PC-3 (cell line): ENCODE measurements at regions of chr16 and their contacts with region 1.

Region 1: DNA sequence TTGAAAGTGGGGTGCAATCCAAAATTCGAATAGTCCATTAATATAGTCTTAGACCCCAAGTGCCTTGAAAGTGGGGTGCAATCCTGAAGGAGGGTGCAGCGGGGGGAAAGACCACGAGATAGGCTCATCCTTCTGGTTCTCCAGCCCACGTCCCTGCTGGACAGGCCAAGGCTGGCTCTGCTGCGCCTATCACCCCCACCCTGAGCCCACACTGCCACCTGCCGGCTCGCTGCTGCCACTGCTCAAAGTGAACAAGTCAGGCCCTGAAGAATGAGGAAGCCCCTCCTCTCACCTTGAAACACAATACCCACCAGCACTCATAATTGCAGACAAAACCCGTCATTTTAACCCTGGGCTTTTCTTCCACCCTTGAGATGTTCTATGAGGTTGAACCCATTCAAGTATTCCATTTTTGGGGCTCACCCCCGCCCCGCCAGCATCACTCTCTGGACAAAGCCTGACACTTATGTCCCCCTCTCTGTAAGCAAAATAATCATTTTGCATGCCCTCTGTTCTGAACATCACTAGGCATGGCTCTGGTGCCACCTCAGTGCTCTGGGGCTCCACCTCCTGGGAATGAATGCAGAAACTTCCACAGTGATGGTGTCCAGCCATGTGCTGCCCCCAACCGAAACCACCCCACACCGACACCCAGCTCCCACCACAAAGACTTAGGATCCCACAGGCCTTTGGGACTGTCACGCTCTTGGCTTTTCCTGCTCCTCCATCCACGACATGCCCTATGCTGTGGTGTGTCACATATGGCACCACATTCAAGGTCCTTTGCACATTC is 56.8 kb downstream of the BEAN1 start:
- DNase-seq: peak; percentile 76
- ATAC-seq: peak; percentile 75
- H3K4me3 ChIP-seq: no peak overlapping the region
- H3K27ac ChIP-seq: no peak overlapping the region
- H3K4me1 ChIP-seq: peaks cover 32% of the 10 kb centered on the region
- H3K27me3 ChIP-seq: no peaks in the 10 kb centered on the region
- CTCF ChIP-seq: peak; percentile 87

Region 2: GRCh38 chr16:66357153-66357928 is 126.5 kb before region 1 on chr16:
- CTCF ChIA-PET with region 1: no interaction called
- POLR2A ChIA-PET with region 1: no interaction called
- intact Hi-C with region 1: loop called (anchors 5 kb)
- DNase-seq: peak; percentile 90
- ATAC-seq: peak; percentile 82
- H3K4me3 ChIP-seq: no peak overlapping the region
- H3K27ac ChIP-seq: no peak overlapping the region
- H3K4me1 ChIP-seq: peaks cover 13% of the 10 kb centered on the region
- H3K27me3 ChIP-seq: no peaks in the 10 kb centered on the region
- CTCF ChIP-seq: peak; percentile 80

Region 3: GRCh38 chr16:66406534-66407221 is 77.2 kb before region 1 on chr16:
- CTCF ChIA-PET with region 1: interaction called, 6 read pairs
- POLR2A ChIA-PET with region 1: no interaction called
- intact Hi-C with region 1: loop called (anchors 1 kb)
- DNase-seq: peak; percentile 69
- ATAC-seq: peak; percentile 66
- H3K4me3 ChIP-seq: peak overlapping the region; percentile 79
- H3K27ac ChIP-seq: peak overlapping the region; percentile 41
- H3K4me1 ChIP-seq: peaks cover 27% of the 10 kb centered on the region
- H3K27me3 ChIP-seq: no peaks in the 10 kb centered on the region
- CTCF ChIP-seq: peak; percentile 76

Region 4: DNA sequence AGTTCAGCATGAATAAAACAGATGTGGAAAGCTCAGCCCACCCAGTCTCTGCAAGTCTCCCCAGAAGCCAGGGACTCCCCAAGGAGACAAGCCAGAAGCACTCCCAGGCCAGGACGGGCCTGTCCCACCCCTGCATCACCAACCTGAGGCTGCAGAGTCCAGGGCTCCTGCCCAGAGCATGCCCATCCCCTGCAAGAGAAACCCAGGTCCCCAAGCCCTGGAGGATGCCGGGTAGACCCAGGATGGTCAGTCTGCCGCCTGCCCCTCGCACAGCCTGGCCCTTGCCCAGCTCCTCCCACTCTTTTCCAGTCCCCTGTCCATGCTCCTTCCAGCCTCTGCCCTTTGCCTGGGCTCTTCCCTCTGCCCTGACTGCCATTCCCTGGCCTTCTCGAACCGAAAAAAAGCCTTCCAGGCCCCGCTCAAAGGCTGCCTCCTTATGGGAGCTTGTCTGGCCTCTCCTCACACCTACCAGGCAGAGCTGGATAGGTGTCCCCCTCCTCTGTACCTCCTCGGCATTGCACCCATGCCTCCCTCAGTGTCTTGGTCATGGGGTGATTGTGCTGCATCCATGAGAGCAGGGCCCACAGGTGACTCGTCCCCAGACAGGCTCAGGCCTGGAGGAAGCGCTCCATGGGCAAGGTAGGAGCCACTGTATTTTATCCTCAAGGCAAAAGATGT is 12.0 kb before region 1 on chr16:
- CTCF ChIA-PET with region 1: no interaction called
- POLR2A ChIA-PET with region 1: no interaction called
- intact Hi-C with region 1: no loop called
- DNase-seq: no peak
- ATAC-seq: no peak
- H3K4me3 ChIP-seq: no peak overlapping the region
- H3K27ac ChIP-seq: no peak overlapping the region
- H3K4me1 ChIP-seq: peaks cover 8% of the 10 kb centered on the region; the same call in 1 of the 2 replicates
- H3K27me3 ChIP-seq: no peaks in the 10 kb centered on the region
- CTCF ChIP-seq: no peak

Region 5: DNA sequence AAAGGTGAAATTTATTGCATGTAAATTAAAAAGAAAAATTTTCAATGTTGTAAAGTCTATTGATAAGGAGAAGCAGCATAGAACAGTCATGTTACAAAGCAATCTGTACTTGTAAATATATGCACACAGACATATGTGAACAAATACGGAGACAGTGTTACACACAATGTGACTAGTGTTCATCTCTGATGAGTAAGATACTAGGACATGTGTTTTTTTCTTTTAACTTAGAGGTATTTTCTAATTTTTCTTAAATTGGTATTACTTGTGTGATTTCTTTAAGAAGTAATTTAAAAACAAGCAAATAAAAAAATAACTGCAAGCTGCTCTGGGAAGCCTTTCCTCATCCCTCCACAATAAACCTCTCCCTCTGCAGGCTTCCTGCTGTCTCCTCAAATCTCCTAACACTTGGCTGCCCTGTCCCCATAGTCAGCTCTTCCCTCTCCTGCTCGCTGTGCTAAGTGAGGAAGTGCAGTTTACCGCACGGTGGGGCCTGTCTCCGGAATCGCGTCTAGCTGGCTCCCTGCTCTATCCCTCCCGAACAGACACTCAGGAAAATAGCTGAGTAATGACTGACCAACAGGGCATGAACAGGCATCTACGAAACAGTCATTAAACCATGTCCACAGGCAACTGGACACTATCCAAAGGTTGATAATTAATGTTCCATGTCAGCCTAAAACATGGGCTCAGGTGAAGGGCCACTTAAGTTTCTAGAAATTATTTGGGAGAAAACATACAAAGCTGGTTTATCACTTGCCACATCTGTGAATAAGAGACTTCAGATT is 176.7 kb after region 1 on chr16:
- CTCF ChIA-PET with region 1: no interaction called
- POLR2A ChIA-PET with region 1: no interaction called
- intact Hi-C with region 1: no loop called
- DNase-seq: peak; percentile 73
- ATAC-seq: peak; percentile 96
- H3K4me3 ChIP-seq: peak overlapping the region; percentile 5; the same call in 1 of the 2 replicates
- H3K27ac ChIP-seq: peak overlapping the region; percentile 65
- H3K4me1 ChIP-seq: peaks cover 21% of the 10 kb centered on the region
- H3K27me3 ChIP-seq: no peaks in the 10 kb centered on the region
- CTCF ChIP-seq: 0 out of 2 replicates have a peak, but pooled peaks have one; percentile 14

Region 6: GRCh38 chr16:66872943-66873684 is 389.2 kb after region 1 on chr16:
- CTCF ChIA-PET with region 1: interaction called, 4 read pairs
- POLR2A ChIA-PET with region 1: interaction called, 19 read pairs
- intact Hi-C with region 1: no loop called
- DNase-seq: peak; percentile 98
- ATAC-seq: peak; percentile 94
- H3K4me3 ChIP-seq: peak overlapping the region; percentile 63
- H3K27ac ChIP-seq: peak overlapping the region; percentile 66
- H3K4me1 ChIP-seq: peaks cover 9% of the 10 kb centered on the region
- H3K27me3 ChIP-seq: no peaks in the 10 kb centered on the region
- CTCF ChIP-seq: peak; percentile 87